MCF 10A (cell line): ENCODE measurements at regions of chr1 and their contacts with region 1.

Region 1: GRCh38 chr1:41416552-41417334 is 55.5 kb downstream of the FOXO6 start:
- DNase-seq: peak; percentile 74
- H3K4me3 Mint-ChIP-seq: no peak overlapping the region
- H3K27ac Mint-ChIP-seq: peak overlapping the region; percentile 42
- H3K4me1 Mint-ChIP-seq: peaks cover 31% of the 10 kb centered on the region
- H3K27me3 Mint-ChIP-seq: no peaks in the 10 kb centered on the region
- CTCF ChIP-seq: peak; percentile 88

Region 2: DNA sequence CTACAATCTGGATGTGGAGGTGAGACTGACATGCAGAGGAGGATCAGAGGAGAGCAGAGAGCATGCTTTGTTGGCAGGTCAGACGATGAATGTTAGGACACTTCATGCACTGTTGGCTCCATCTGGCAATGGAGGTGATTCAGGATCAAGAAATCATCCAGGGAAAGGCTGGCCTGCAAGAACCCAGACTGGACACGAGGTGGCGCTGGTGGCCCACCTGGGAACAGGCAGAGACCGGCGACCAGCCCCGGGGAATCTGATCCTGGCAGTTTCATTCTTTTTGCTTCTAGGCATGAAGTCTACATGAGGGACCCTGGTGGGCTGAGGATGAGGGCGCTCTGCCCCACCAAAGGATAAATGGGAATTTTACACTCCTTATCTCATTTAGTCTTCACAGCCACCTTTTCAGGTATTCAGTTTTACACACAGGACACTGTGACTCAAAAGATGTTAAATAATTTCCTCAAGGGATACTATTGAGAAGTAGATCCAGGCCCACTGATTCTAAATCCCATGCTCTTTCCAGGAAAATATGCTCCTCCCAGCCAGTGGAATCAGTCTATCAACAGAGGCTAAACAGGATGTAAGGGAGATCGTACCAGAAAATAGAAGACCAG is 148.5 kb before region 1 on chr1:
- CTCF ChIA-PET with region 1: interaction called, 29 read pairs
- POLR2A ChIA-PET with region 1: interaction called, 3 read pairs
- intact Hi-C with region 1: loop called (anchors 1 kb)
- DNase-seq: peak; percentile 72
- H3K4me3 Mint-ChIP-seq: no peak overlapping the region
- H3K27ac Mint-ChIP-seq: no peak overlapping the region
- H3K4me1 Mint-ChIP-seq: peaks cover 6% of the 10 kb centered on the region
- H3K27me3 Mint-ChIP-seq: no peaks in the 10 kb centered on the region
- CTCF ChIP-seq: peak; percentile 93

Region 3: DNA sequence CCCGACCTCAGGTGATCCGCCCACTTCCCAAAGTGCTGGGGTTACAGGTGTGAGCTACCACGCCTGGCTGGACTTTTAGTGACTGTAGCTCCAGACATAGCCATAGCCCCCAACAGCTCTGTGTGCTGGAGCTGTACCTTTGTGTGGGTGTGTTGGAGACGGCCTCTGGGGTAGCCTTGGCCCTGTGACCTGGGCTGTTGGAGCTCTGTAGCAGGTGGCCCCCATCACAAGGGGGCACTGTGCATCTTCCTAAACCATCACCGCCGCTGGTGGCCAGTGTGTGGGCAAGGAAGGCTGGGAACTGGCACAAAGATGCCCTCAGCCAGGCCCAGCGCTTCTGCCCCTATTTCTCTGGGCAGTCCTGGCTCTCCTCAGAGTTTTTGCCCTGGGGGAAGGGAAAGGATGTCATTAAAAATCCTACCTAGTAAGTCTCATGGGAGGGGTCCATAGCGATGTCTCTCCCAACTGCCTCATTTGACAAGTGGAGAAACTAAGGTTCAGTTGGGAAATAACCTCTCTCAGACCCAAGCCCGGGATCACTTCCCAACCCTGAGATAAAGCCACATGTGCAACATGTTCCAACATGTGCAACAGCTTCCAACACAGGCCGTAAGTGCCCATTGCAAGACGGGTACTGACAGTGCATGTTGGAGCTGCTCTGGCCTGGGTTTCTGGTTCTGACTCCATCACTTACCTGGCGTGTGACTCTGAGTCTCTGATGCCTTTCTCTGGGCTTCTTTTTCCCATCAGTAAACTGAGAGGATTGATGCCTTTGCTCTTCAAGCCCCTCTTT is 93.7 kb before region 1 on chr1:
- CTCF ChIA-PET with region 1: interaction called, 7 read pairs
- POLR2A ChIA-PET with region 1: no interaction called
- intact Hi-C with region 1: loop called (anchors 1 kb)
- DNase-seq: peak; percentile 62
- H3K4me3 Mint-ChIP-seq: no peak overlapping the region
- H3K27ac Mint-ChIP-seq: no peak overlapping the region
- H3K4me1 Mint-ChIP-seq: no peaks in the 10 kb centered on the region
- H3K27me3 Mint-ChIP-seq: no peaks in the 10 kb centered on the region
- CTCF ChIP-seq: peak; percentile 31

Region 4: GRCh38 chr1:41341772-41342562 is 74.8 kb before region 1 on chr1:
- CTCF ChIA-PET with region 1: interaction called, 18 read pairs
- POLR2A ChIA-PET with region 1: interaction called, 5 read pairs
- intact Hi-C with region 1: no loop called
- DNase-seq: peak; percentile 62
- H3K4me3 Mint-ChIP-seq: no peak overlapping the region
- H3K27ac Mint-ChIP-seq: peak overlapping the region; percentile 2
- H3K4me1 Mint-ChIP-seq: peaks cover 6% of the 10 kb centered on the region
- H3K27me3 Mint-ChIP-seq: no peaks in the 10 kb centered on the region
- CTCF ChIP-seq: no peak

Region 5: GRCh38 chr1:41360993-41361753 is 55.6 kb before region 1 on chr1 and contains the start of gene FOXO6:
- CTCF ChIA-PET with region 1: interaction called, 4 read pairs
- POLR2A ChIA-PET with region 1: interaction called, 3 read pairs
- intact Hi-C with region 1: loop called (anchors 1 kb)
- DNase-seq: peak; percentile 98
- H3K4me3 Mint-ChIP-seq: peak within 1 kb of the TSS; percentile 28
- H3K27ac Mint-ChIP-seq: no peak within 1 kb of the TSS
- H3K4me1 Mint-ChIP-seq: peaks cover 35% of the 10 kb centered on the region
- H3K27me3 Mint-ChIP-seq: peaks cover 15% of the 10 kb centered on the region
- CTCF ChIP-seq: peak; percentile 10
- total RNA-seq, gene FOXO6: 0.22 and 0.28 TPM in 2 replicates

Region 6: GRCh38 chr1:41404308-41404761 is 12.4 kb before region 1 on chr1:
- CTCF ChIA-PET with region 1: interaction called, 27 read pairs
- POLR2A ChIA-PET with region 1: interaction called, 3 read pairs
- intact Hi-C with region 1: no loop called
- DNase-seq: peak; percentile 25
- H3K4me3 Mint-ChIP-seq: no peak overlapping the region
- H3K27ac Mint-ChIP-seq: no peak overlapping the region
- H3K4me1 Mint-ChIP-seq: peaks cover 7% of the 10 kb centered on the region
- H3K27me3 Mint-ChIP-seq: peaks cover 20% of the 10 kb centered on the region
- CTCF ChIP-seq: no peak